AG04449 (cell line): ENCODE measurements at regions of chr16 and their contacts with region 1.

Region 1: DNA sequence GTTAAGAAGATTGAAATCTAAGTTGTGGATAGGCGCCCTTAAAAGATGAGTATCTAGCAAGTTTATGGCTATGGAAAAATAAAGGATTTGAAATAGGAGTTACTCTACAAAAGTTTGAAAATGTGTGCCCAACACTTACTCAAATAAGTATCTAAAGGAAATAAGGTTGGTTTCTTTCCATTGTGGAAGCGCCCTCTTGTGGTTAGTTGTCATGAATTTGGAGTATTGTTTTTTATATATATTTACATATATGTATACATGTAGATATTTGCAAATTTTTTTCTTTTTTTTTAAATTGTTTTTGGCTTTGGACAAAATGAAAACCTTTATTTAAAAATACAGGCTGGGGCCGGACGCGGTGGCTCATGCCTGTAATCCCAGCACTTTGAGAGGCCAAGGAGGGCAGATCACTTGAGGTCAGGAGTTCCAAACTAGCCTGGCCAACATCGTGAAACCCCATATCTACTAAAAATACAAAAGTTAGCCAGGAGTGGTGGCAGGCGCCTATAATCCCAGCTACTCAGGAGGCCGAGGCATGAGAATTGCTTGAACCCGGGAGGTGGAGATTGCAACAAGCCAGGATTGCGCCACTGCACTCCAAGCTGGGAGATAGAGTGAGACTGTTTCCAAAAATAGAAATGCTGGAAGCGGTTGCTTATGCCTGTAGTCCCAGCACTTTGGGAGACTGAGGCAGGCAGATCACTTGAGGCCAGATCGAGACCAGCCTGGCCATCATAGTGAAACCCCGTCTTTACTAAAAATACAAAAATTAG is 24.0 kb upstream of the VPS4A start:
- DNase-seq: no peak
- H3K4me3 ChIP-seq: no peak overlapping the region
- CTCF ChIP-seq: peak; percentile 13

Region 2: DNA sequence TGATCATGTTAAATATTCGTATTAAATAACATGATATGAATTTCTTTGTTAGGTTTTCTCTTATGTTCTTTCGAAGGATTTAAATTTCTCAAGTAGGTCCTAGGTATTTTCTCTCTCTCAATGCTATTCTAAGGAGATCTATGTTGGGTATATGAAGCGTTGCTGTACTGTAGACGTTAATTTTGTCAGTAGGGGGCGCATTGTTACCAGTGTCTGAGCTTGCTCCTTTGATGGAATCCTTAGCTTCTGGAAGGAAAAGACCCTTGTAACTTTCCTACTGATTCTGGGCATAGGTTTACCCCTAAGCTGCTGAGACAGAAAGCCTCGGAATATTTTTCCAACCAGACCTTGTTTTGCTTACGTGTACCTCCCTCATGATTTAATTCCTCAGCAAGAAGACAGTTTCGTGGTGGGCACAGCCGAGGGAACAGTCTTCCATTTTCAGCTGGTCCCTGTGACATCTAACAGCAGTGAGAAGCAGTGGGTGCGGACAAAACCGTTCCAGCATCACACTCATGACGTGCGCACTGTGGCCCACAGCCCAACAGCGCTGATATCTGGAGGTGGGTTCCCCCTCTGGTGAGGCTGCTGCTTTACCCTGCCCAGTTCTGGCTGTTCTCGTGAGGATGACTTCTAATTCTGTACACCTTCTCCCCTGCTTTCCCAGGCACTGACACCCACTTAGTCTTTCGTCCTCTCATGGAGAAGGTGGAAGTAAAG is 136.8 kb before region 1 on chr16:
- CTCF ChIA-PET with region 1: interaction called, 201 read pairs
- POLR2A ChIA-PET with region 1: interaction called, 3 read pairs
- DNase-seq: no peak
- H3K4me3 ChIP-seq: no peak overlapping the region
- CTCF ChIP-seq: peak; percentile 71

Region 3: GRCh38 chr16:69166221-69166833 is 120.8 kb before region 1 on chr16:
- CTCF ChIA-PET with region 1: interaction called, 39 read pairs
- POLR2A ChIA-PET with region 1: no interaction called
- DNase-seq: no peak
- H3K4me3 ChIP-seq: no peak overlapping the region
- CTCF ChIP-seq: no peak

Region 4: GRCh38 chr16:69276148-69277115 is 10.7 kb before region 1 on chr16:
- CTCF ChIA-PET with region 1: interaction called, 19 read pairs
- POLR2A ChIA-PET with region 1: no interaction called
- DNase-seq: peak; percentile 93
- H3K4me3 ChIP-seq: peak overlapping the region; percentile 31; the same call in 1 of the 2 replicates
- CTCF ChIP-seq: no peak

Region 5: DNA sequence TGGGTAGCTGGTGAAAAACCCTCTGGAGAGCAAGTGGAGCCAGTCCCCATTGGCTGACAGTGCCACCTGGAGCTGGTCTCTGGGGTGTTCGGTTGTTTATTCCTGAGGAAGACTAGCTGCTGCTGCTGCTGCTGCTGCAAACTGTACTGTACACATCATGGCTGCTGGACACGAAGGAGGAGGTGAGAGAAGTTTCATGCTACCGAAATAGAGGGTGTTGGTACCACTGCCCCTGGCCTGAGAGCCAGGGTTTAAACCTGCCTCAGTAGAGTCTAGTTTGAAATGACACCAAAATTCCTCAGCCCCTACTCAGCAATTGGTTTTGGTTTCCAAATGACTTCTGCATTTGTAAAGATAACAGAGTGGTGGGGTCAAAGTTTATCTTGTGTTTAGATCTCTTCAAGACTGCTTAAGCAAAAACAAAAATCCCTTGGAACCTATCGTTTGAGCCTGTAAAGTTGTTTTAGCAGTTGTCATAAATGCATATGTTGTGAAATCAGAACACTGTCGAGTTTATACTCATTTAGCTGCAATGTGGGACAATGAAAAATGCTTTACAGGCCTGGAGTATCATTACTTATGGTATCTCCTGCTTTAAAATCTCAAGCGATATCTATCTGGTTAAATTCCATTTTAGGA is 178.1 kb after region 1 on chr16:
- CTCF ChIA-PET with region 1: no interaction called
- POLR2A ChIA-PET with region 1: no interaction called
- DNase-seq: no peak
- H3K4me3 ChIP-seq: no peak overlapping the region
- CTCF ChIP-seq: no peak